Right ventricle myocardium superior (tissue), 1 donor: ENCODE measurements at regions of chr16 and their contacts with region 1.

Region 1: GRCh38 chr16:1054660-1055556 is 17.6 kb upstream of the SSTR5 start:
- DNase-seq: peak; percentile 75
- ATAC-seq: peak; percentile 88

Region 2: GRCh38 chr16:492211-492875 is 562.6 kb before region 1 on chr16:
- intact Hi-C with region 1: no loop called
- DNase-seq: no peak
- ATAC-seq: peak; percentile 66

Region 3: GRCh38 chr16:714558-715476 is 340.1 kb before region 1 on chr16 and contains the start of gene METRN:
- intact Hi-C with region 1: loop called (anchors 5 kb)
- DNase-seq: peak; percentile 96
- ATAC-seq: peak; percentile 94
- total RNA-seq, gene METRN: 59.6 TPM

Region 4: GRCh38 chr16:813204-813915 is 241.5 kb before region 1 on chr16:
- intact Hi-C with region 1: loop called (anchors 2 kb)
- DNase-seq: peak; percentile 64
- ATAC-seq: peak; percentile 88

Region 5: GRCh38 chr16:931626-932500 is 123.0 kb before region 1 on chr16:
- intact Hi-C with region 1: no loop called
- DNase-seq: no peak
- ATAC-seq: no peak

Region 6: DNA sequence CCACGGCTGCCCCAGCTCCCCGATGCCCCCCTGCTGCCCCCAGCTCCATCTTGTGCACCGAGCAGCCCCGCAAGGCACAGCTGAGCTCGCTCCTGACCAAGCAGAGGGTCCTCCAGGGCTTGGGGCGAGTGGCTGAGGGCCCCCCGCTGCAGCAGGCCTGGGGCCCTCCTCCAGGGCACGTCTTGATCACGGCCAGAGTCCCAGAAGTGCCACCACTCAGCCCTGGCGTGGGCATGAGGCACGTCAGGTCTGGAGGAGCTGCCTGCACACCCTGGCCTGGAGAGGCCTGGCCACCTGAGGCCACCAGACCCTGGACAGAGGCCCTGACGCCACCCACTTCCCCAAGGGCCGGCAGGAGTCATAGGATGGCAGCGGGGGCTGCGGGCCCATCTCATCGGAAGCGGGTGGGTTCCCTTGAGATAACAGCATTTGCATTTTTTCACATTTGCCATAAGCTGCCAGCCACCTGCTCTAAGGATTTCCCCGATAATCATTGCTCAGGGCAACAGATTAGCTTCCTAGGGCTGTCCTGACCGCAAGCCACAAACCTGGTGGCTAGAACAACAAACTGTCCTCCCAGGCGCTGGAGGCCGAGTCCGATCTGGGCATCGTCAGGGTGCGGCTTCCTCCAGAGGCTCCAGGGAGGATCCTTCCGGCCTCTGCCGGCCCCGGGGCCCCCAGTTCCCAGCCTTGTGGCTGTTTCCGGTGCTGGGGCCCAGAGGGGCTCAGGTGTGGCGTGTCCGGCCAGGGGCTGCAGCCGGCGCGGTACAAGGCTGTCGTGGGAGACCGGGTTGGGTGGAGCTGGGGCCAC is 65.1 kb after region 1 on chr16:
- intact Hi-C with region 1: no loop called
- DNase-seq: no peak
- ATAC-seq: no peak